ENCODE measurements at regions of chr9 and their contacts with region 1.

Region 1: GRCh38 chr9:297104-297972 is 82.7 kb downstream of the DOCK8 start:
- DNase-seq: peak; percentile 42
- ATAC-seq: peak; percentile 96
- H3K4me3 Mint-ChIP-seq: peak overlapping the region; percentile 76
- H3K27ac Mint-ChIP-seq: peak overlapping the region; percentile 89
- H3K4me1 Mint-ChIP-seq: peaks cover 40% of the 10 kb centered on the region
- H3K27me3 Mint-ChIP-seq: no peaks in the 10 kb centered on the region
- CTCF ChIP-seq: no peak

Region 2: GRCh38 chr9:257957-258356 is 39.4 kb before region 1 on chr9:
- CTCF ChIA-PET with region 1: no interaction called
- POLR2A ChIA-PET with region 1: no interaction called
- intact Hi-C with region 1: no loop called
- DNase-seq: no peak
- ATAC-seq: no peak
- H3K4me3 Mint-ChIP-seq: no peak overlapping the region
- H3K27ac Mint-ChIP-seq: no peak overlapping the region
- H3K4me1 Mint-ChIP-seq: peaks cover 19% of the 10 kb centered on the region
- H3K27me3 Mint-ChIP-seq: no peaks in the 10 kb centered on the region
- CTCF ChIP-seq: no peak

Region 3: GRCh38 chr9:272251-273213 is 24.8 kb before region 1 on chr9:
- CTCF ChIA-PET with region 1: interaction called, 7 read pairs
- POLR2A ChIA-PET with region 1: interaction called, 35 read pairs
- intact Hi-C with region 1: loop called (anchors 1 kb)
- DNase-seq: peak; percentile 27
- ATAC-seq: peak; percentile 97
- H3K4me3 Mint-ChIP-seq: peak overlapping the region; percentile 90
- H3K27ac Mint-ChIP-seq: peak overlapping the region; percentile 95
- H3K4me1 Mint-ChIP-seq: peaks cover 52% of the 10 kb centered on the region
- H3K27me3 Mint-ChIP-seq: no peaks in the 10 kb centered on the region
- CTCF ChIP-seq: no peak

Region 4: DNA sequence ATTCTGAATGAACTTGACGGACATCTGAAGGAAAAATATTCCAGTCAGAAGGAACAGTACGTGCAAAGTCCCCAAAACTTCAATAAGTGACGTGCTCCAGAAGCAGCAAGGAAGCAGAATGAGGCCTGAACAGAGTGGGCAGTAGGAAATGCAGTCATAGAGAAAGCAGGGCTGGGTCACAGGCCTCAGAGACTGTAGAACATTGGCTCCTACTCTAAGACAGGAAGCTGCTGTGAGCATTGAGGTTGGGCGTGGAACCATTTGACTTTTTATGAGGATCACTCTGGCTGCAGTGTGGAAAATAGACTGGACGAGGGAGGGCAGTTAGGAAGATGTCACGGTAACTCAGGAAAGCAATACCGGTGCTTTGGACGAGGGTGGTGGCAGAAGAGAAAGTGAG is 18.7 kb before region 1 on chr9:
- CTCF ChIA-PET with region 1: interaction called, 7 read pairs
- POLR2A ChIA-PET with region 1: interaction called, 35 read pairs
- intact Hi-C with region 1: loop called (anchors 1 kb)
- DNase-seq: no peak
- ATAC-seq: peak; percentile 51
- H3K4me3 Mint-ChIP-seq: no peak overlapping the region
- H3K27ac Mint-ChIP-seq: no peak overlapping the region
- H3K4me1 Mint-ChIP-seq: peaks cover 52% of the 10 kb centered on the region
- H3K27me3 Mint-ChIP-seq: no peaks in the 10 kb centered on the region
- CTCF ChIP-seq: no peak

Region 5: GRCh38 chr9:426264-426663 is 128.9 kb after region 1 on chr9:
- CTCF ChIA-PET with region 1: no interaction called
- POLR2A ChIA-PET with region 1: no interaction called
- intact Hi-C with region 1: no loop called
- DNase-seq: no peak
- ATAC-seq: no peak
- H3K4me3 Mint-ChIP-seq: no peak overlapping the region
- H3K27ac Mint-ChIP-seq: no peak overlapping the region
- H3K4me1 Mint-ChIP-seq: no peaks in the 10 kb centered on the region
- H3K27me3 Mint-ChIP-seq: no peaks in the 10 kb centered on the region
- CTCF ChIP-seq: no peak

Region 6: GRCh38 chr9:693201-694091 is 396.1 kb after region 1 on chr9:
- CTCF ChIA-PET with region 1: no interaction called
- POLR2A ChIA-PET with region 1: no interaction called
- intact Hi-C with region 1: no loop called
- DNase-seq: no peak
- ATAC-seq: no peak
- H3K4me3 Mint-ChIP-seq: no peak overlapping the region
- H3K27ac Mint-ChIP-seq: no peak overlapping the region
- H3K4me1 Mint-ChIP-seq: peaks cover 3% of the 10 kb centered on the region
- H3K27me3 Mint-ChIP-seq: peaks cover 3% of the 10 kb centered on the region
- CTCF ChIP-seq: no peak